Activated naive CD4-positive, alpha-beta T cell treated with anti-CD3 and anti-CD28 coated beads for 36 hours (primary cell): ENCODE measurements at regions of chr3 and their contacts with region 1.

Region 1: DNA sequence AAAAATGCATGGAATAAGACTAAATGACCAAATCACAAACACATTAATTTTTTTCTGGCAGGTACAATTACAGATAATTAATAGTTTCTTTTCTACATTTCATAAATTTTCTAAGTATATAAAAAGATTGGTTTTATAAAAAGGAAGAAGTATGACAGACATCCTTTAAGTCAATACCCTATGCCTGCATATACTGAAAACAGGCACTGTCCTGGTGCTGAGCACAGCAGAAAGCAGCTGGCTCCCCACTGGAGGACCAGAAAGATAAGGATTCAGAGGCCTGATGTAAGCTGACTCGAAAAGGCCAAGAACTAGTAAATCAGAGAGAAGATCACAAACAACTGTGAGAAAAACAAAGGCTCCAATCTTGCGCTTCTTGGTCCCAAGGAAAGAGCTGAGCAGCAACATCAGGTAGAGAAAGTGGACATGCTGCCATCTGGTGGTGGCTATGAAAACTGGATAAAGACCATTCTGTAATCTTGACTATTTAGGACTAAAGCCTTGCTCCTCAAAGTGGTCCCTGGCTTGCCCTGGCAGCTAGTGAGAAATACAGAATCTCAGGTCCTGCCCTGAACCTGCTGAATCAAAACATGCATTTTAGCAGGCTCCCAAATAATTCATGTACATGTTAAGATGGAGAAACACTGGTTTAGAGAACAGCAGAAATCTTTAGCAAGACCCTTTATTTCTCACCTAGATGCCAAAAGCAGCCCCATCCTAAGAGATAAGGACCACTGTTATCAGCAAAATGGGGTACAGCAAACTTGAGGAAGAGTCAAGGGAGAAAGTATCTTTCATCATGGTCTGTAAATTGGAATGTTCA is 76.0 kb downstream of the TRANK1 start:
- DNase-seq: peak; percentile 69
- H3K4me3 Mint-ChIP-seq: peak overlapping the region; percentile 13
- H3K27ac Mint-ChIP-seq: no peak overlapping the region
- H3K4me1 Mint-ChIP-seq: peaks cover 23% of the 10 kb centered on the region
- H3K27me3 Mint-ChIP-seq: no peaks in the 10 kb centered on the region

Region 2: GRCh38 chr3:36729204-36730056 is 139.4 kb before region 1 on chr3:
- CTCF ChIA-PET with region 1: interaction called, 7 read pairs
- intact Hi-C with region 1: loop called (anchors 1 kb)
- DNase-seq: no peak
- H3K4me3 Mint-ChIP-seq: no peak overlapping the region
- H3K27ac Mint-ChIP-seq: no peak overlapping the region
- H3K4me1 Mint-ChIP-seq: no peaks in the 10 kb centered on the region
- H3K27me3 Mint-ChIP-seq: peaks cover 7% of the 10 kb centered on the region

Region 3: DNA sequence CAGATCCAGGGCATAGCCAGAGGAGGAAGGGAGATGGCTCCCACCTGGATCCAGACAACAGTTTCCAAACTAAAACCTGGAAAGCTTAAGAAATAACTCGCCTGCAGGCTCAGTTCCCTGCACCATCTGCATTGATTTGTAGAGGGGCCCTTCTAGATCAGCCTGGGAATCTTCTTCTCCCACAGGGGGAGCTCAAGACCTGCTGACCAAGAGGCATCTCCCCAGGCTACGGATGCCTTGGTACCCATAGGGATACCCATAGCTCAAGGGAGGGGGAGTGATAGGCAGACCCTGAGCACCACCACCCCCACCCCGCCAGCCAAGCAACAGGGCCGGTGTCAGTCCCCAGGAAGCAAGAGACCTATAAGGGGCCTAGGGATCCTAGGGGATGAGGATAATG is 76.5 kb before region 1 on chr3:
- CTCF ChIA-PET with region 1: interaction called, 9 read pairs
- intact Hi-C with region 1: loop called (anchors 1 kb)
- DNase-seq: peak; percentile 30
- H3K4me3 Mint-ChIP-seq: no peak overlapping the region
- H3K27ac Mint-ChIP-seq: no peak overlapping the region
- H3K4me1 Mint-ChIP-seq: no peaks in the 10 kb centered on the region
- H3K27me3 Mint-ChIP-seq: no peaks in the 10 kb centered on the region